ENCODE measurements at regions of chr17 and their contacts with region 1.

Region 1: DNA sequence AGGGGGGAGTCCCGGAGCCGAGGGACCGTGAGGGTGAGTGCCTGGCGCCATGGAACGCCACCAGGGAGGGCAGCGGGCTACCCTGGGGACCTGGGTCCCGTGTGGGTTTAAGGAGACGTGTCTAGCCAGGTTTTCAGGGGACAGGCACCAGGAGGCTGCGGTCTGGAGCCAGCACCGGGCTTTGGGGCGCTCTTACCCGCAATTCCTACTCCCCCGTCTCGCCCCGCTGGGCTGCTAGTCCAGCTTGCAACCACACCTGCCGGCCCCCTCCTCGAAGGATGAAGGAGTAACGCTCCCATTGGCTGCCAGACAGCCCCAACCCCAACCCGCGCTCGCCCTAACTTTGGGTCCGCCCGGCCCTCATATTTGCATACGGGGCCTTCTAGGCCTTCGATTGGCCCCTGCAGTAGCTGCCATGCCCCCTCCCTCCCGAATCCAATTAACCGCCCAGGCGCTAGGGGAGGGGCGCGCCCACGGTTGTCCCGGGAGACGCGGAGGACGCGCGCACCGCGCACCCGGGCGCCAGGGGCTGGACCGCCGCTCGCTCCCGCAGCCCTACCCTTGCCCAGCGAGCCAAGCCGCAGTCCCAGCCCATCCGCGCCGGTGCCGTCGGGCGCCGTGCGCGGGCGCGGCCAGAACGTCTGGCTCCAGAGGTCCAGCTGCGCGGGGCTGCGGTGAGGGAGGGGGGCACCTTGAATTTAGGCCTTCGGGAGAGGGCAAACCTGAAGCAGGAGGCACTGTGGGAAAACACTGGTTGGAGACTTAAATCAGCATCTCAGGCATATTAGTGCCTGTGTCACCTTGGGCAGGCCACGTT is at the start of gene TTLL6:
- DNase-seq: peak; percentile 93
- H3K4me3 Mint-ChIP-seq: peak within 1 kb of the TSS; percentile 68
- H3K27ac Mint-ChIP-seq: peak within 1 kb of the TSS; percentile 6
- H3K4me1 Mint-ChIP-seq: peaks cover 16% of the 10 kb centered on the region
- H3K27me3 Mint-ChIP-seq: peaks cover 87% of the 10 kb centered on the region

Region 2: GRCh38 chr17:48526608-48527546 is 290.1 kb before region 1 on chr17:
- CTCF ChIA-PET with region 1: no interaction called
- DNase-seq: no peak
- H3K4me3 Mint-ChIP-seq: no peak overlapping the region
- H3K27ac Mint-ChIP-seq: no peak overlapping the region
- H3K4me1 Mint-ChIP-seq: peaks cover 3% of the 10 kb centered on the region
- H3K27me3 Mint-ChIP-seq: peaks cover 100% of the 10 kb centered on the region

Region 3: DNA sequence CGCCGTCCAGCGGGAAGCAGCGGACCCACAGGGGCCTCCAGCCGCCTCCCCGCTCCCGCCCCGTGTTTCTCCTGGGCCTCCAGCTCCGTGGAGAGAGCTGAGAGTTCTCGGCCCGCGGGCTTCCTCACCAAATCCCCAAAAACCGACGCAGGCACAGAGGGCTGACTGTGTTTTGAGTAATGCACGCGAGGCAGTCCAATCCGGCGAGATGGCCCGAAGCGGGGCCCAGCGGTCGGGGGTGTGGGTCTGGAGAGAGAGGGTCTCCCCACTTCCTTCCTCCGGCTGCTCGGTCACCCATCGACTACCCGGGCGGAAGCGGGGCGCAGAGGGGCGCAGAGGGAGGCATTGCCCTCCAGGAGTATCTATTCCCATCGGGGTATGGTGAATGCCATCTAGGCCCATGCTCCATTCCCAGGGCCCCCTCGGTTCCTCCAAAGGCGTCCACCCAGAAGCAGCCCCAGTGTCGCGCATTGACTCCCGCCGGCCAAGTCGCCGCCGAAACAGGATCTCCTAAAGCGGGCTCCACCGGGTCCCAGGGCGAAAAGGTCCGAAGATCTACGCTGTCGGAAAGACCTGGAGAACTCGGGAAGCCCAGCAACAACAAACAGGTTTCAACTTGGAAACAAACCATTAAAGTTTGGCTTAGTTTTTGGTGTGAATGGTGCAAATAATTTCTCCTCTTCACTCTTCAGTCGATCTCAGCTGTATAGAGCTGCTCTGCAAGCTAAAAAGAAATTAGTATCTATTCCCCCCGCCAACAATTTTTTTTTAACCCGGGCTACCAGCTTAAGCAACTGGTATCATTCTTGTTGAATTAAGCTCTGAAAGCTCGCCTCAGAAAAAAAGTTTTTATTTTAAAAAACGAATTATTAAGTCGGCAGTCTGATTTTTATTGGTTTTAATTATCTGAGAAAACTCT is 69.3 kb before region 1 on chr17:
- CTCF ChIA-PET with region 1: no interaction called
- DNase-seq: no peak
- H3K4me3 Mint-ChIP-seq: no peak overlapping the region
- H3K27ac Mint-ChIP-seq: no peak overlapping the region
- H3K4me1 Mint-ChIP-seq: peaks cover 6% of the 10 kb centered on the region
- H3K27me3 Mint-ChIP-seq: peaks cover 98% of the 10 kb centered on the region

Region 4: DNA sequence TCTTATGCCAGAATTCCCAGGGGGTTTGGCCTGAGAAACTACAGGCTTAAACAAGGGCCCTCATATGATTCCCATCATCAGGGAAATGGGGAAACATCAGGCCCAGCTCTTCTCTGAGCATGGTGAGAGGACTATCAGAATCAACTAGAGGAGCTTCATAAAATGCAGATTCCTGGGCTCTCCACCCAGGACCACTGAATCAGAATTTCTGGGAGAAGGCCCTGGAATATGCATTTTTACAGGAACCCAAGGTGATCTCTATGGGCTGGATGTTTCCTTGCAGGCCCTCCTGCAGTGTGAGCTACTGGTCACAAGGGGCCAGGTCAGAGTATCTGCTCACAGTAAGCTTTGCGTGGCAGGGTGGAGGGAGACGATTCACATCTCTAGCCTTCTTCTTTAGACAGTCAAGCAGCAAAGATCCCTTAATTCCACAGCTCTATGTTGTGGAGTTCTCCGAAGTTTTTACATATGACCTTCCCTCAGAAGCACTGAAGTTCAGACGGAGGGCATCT is 49.7 kb before region 1 on chr17:
- CTCF ChIA-PET with region 1: no interaction called
- DNase-seq: no peak
- H3K4me3 Mint-ChIP-seq: no peak overlapping the region
- H3K27ac Mint-ChIP-seq: no peak overlapping the region
- H3K4me1 Mint-ChIP-seq: no peaks in the 10 kb centered on the region
- H3K27me3 Mint-ChIP-seq: peaks cover 66% of the 10 kb centered on the region

Region 5: GRCh38 chr17:48804925-48805411 is 12.0 kb before region 1 on chr17:
- CTCF ChIA-PET with region 1: interaction called, 12 read pairs
- DNase-seq: peak; percentile 80
- H3K4me3 Mint-ChIP-seq: no peak overlapping the region
- H3K27ac Mint-ChIP-seq: no peak overlapping the region
- H3K4me1 Mint-ChIP-seq: no peaks in the 10 kb centered on the region
- H3K27me3 Mint-ChIP-seq: peaks cover 62% of the 10 kb centered on the region

Region 6: DNA sequence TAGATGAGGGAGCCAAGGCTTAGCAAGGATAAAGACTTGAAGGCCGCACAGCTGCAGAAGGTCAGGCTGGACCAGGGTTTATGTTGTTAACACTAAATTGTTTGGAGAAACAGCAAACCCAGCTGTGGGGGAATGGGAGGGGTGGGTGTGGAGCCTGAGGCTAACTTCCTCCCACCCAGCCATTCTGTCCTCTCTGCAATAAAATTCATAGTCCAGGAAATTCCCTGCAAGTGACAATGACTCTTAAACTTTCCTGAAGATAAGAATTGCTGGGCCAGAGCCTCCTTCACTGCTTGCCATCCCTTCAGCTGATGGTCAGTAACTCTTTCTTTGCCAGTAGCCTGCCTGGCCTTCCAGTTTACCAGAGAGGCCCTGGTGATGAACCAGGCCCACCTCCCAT is 56.2 kb after region 1 on chr17:
- CTCF ChIA-PET with region 1: interaction called, 505 read pairs
- DNase-seq: no peak
- H3K4me3 Mint-ChIP-seq: no peak overlapping the region
- H3K27ac Mint-ChIP-seq: no peak overlapping the region
- H3K4me1 Mint-ChIP-seq: peaks cover 18% of the 10 kb centered on the region
- H3K27me3 Mint-ChIP-seq: peaks cover 23% of the 10 kb centered on the region

Measured in activated naive CD4-positive, alpha-beta T cell treated with anti-CD3 and anti-CD28 coated beads, Interleukin-2, amount 10 ng/mL, durations not matched to agents 7 days and 5 days (primary cell).